A549 (cell line): ENCODE measurements at regions of chr17 and their contacts with region 1.

Region 1: DNA sequence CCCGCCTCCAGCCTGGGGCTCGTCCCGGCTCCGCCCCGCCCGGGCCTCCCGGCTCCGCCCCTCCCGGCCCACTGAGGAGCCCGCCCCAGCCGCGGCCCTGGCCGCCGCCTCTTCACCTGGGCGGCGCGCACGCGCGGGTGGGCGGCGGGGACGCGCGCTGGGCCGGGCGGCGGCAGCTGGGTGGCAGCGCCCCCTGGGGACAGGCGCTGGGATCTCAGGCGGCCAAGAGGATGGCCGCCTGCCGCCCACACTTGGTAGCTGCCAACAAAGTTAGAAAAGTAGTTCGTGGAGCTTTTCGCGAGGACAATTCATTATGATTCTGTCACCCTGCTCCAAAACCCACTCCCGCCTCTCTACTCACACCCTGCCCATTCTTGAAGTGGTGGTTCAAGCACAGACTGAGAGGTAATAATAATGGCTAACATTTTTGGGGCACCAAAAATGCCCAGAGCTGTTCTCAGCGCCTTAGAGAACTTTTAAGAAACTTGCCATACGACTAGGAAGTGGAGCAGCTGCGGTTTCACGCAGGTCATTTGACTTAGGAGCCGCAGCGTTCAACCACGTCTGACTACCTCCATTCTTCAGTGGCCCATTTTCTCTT is 340 bp upstream of the MYO1D start:
- DNase-seq: peak; percentile 75 to 84
- ATAC-seq: peak; percentile 96 to 97
- H3K4me3 ChIP-seq: peak overlapping the region; percentile 77
- H3K27ac ChIP-seq: peak overlapping the region; percentile 66 to 88; a peak in 5 of 6 replicates
- H3K4me1 ChIP-seq: peaks cover 9% of the 10 kb centered on the region; the same call in 1 of the 3 replicates
- CTCF ChIP-seq: peak; percentile 99
- EP300 ChIP-seq: no peak
- POLR2A ChIP-seq: no peak
- RAD21 ChIP-seq: peak; percentile 50 to 79

Region 2: DNA sequence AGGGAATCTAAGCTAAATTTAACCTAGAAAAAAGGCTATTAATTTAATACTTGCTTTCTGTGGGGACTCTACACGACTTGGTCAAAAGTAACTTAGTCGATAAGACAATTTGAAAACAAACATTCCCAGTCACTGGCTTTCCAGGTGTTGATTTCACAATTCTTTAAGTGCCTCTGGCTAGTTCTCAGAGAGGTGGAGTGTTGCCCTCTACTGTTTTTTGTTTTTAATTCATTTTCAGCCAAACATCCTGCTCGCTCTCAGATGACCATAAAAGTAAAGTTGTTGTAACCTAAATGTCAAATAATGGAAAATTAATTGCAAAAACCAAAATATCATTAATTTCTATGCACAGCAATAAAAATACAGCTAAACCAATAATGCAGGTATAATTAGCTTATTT is 107.4 kb before region 1 on chr17:
- CTCF ChIA-PET with region 1: interaction called, 205 read pairs
- POLR2A ChIA-PET with region 1: no interaction called
- DNase-seq: peak; percentile 20 to 38
- ATAC-seq: no peak; a peak in 2 of 6 replicates
- H3K4me3 ChIP-seq: no peak overlapping the region
- H3K27ac ChIP-seq: no peak overlapping the region
- H3K4me1 ChIP-seq: peaks cover 19% of the 10 kb centered on the region
- CTCF ChIP-seq: peak; percentile 51
- EP300 ChIP-seq: no peak
- POLR2A ChIP-seq: no peak
- RAD21 ChIP-seq: peak; percentile 43 to 54; a peak in 4 of 5 replicates

Region 3: DNA sequence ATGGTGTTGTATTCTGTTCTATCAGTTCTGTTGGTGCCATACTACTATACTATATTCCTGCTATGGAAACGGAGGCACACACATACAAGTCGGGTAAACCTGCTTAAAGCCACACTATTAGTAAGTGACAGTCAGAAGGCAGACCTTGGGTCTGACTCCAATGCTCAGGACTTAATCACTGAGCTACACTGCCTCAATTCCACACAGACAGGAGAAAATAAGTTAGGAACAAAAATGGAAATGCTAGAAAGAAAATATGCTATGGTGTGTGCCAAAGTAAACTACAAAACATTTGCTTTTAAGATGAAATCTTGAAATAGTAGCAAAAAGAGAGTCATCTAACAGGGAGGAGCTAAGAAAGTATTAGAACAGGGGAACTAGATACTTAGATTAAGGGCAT is 48.4 kb before region 1 on chr17:
- CTCF ChIA-PET with region 1: interaction called, 38 read pairs
- POLR2A ChIA-PET with region 1: no interaction called
- DNase-seq: no peak
- ATAC-seq: peak in 1 of 2 experiments; percentile 31; a peak in 3 of 6 replicates
- H3K4me3 ChIP-seq: peak overlapping the region; percentile 39; the same call in 2 of the 3 replicates
- H3K27ac ChIP-seq: no peak overlapping the region
- H3K4me1 ChIP-seq: peaks cover 8% of the 10 kb centered on the region; the same call in 2 of the 3 replicates
- CTCF ChIP-seq: no peak
- EP300 ChIP-seq: no peak
- POLR2A ChIP-seq: no peak
- RAD21 ChIP-seq: no peak

Region 4: GRCh38 chr17:32854207-32854606 is 23.1 kb before region 1 on chr17:
- CTCF ChIA-PET with region 1: interaction called, 31 read pairs
- POLR2A ChIA-PET with region 1: no interaction called
- DNase-seq: no peak
- ATAC-seq: no peak
- H3K4me3 ChIP-seq: no peak overlapping the region
- H3K27ac ChIP-seq: no peak overlapping the region
- H3K4me1 ChIP-seq: peaks cover 7% of the 10 kb centered on the region; the same call in 1 of the 3 replicates
- CTCF ChIP-seq: no peak
- EP300 ChIP-seq: no peak
- POLR2A ChIP-seq: no peak
- RAD21 ChIP-seq: no peak

Region 5: GRCh38 chr17:32894245-32894644 is 17.0 kb after region 1 on chr17:
- CTCF ChIA-PET with region 1: interaction called, 15 read pairs
- POLR2A ChIA-PET with region 1: no interaction called
- DNase-seq: no peak
- ATAC-seq: no peak
- H3K4me3 ChIP-seq: no peak overlapping the region
- H3K27ac ChIP-seq: no peak overlapping the region
- H3K4me1 ChIP-seq: no peaks in the 10 kb centered on the region
- CTCF ChIP-seq: no peak
- EP300 ChIP-seq: no peak
- POLR2A ChIP-seq: no peak
- RAD21 ChIP-seq: no peak

Region 6: DNA sequence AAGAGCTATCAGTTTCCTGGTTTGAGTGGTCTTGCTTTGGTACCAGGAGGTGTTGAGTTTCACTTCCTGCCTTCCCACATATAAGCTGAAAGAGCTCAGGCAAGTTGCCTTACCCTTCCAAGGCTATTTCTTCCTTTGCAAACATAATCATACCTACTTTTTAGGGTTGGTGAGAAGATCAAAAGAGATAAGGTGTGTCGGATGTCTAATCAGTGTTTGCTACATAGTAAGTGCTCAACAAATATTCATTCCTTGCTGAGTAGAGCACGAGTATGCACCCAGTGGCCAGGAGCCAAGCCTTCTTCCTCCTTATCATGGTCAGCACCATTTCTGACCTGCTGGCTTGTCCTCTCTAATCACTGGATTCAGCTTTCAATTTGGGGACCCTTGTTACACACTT is 38.0 kb after region 1 on chr17:
- CTCF ChIA-PET with region 1: interaction called, 26 read pairs
- POLR2A ChIA-PET with region 1: no interaction called
- DNase-seq: no peak
- ATAC-seq: no peak
- H3K4me3 ChIP-seq: no peak overlapping the region
- H3K27ac ChIP-seq: no peak overlapping the region
- H3K4me1 ChIP-seq: peaks cover 7% of the 10 kb centered on the region
- CTCF ChIP-seq: no peak
- EP300 ChIP-seq: no peak
- POLR2A ChIP-seq: no peak
- RAD21 ChIP-seq: no peak